ENCODE measurements at regions of chr10 and their contacts with region 1.

Region 1: GRCh38 chr10:7818295-7819122 is at the start of gene TAF3:
- DNase-seq: peak; percentile 84 to 94 (median 92)
- ATAC-seq: peak; percentile 88 to 92
- H3K4me3 Mint-ChIP-seq: peak within 1 kb of the TSS; percentile 93 to 99 (median 97)
- H3K27ac Mint-ChIP-seq: peak within 1 kb of the TSS; percentile 88 to 98 (median 94)
- H3K4me1 Mint-ChIP-seq: peaks cover 18 to 50% (median 44%) of the 10 kb centered on the region in 4 donors
- H3K27me3 Mint-ChIP-seq: peaks cover 0 to 3% (median 0%) of the 10 kb centered on the region in 5 donors
- polyA plus RNA-seq, gene TAF3: 6.8 to 16.4 (median 11.0) TPM

Region 2: DNA sequence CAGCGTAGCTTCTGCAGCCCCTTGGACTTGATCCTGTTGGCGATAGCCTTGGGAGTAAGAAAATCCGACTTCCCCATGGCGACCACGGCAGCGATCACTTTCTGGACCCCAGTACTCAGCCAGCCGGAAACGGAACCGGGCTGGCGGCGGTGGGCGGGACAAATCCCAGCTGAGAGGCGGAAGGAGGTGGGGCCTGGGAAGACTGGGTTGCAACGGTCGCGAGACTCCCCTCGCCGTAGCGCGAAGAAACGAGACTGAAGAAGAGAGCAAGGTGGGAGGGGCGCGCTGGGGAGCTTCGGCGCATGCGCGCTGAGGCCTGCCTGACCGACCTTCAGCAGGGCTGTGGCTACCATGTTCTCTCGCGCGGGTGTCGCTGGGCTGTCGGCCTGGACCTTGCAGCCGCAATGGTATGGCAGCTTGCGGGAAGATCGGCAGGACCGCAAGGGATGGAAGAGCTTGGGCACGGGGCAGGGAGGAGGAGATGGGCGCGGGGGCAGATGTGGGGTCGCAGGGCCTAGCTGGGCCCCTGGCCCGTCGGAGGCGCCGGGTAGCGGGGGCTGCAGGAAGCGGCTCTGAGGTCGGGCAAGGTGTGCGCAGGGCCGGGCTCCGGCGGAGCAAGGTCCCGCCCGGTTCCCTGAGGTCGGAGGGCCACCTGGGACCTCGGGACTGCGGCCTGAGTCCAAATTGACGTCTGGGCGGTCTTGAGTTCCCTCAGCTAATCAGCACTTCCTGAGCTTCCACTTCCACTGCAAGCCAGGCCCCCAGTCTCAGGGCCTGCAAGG is 30.5 kb before region 1 on chr10 and contains the starts of genes ATP5F1C and KIN:
- POLR2A ChIA-PET with region 1: interaction called, 89 read pairs
- DNase-seq: peak; percentile 94 to 98 (median 97)
- ATAC-seq: peak; percentile 92 to 94
- H3K4me3 Mint-ChIP-seq: no peak within 1 kb of the TSS
- H3K27ac Mint-ChIP-seq: no peak within 1 kb of the TSS
- H3K4me1 Mint-ChIP-seq: peaks cover 32 to 73% (median 68%) of the 10 kb centered on the region in 4 donors
- H3K27me3 Mint-ChIP-seq: no peaks in the 10 kb centered on the region
- polyA plus RNA-seq, gene ATP5F1C: 338 to 486 (median 458) TPM
- polyA plus RNA-seq, gene KIN: 3.2 to 5.6 (median 3.5) TPM

Region 3: GRCh38 chr10:7832060-7832459 is 13.6 kb after region 1 on chr10:
- POLR2A ChIA-PET with region 1: no interaction called
- DNase-seq: no peak
- ATAC-seq: no peak
- H3K4me3 Mint-ChIP-seq: no peak overlapping the region
- H3K27ac Mint-ChIP-seq: peak overlapping the region in 1 of 10 donors; percentile 63
- H3K4me1 Mint-ChIP-seq: peaks cover 26 to 78% (median 55%) of the 10 kb centered on the region in 4 donors
- H3K27me3 Mint-ChIP-seq: no peaks in the 10 kb centered on the region

Measured in naive thymus-derived CD8-positive, alpha-beta T cell (primary cell).